Endothelial cell of umbilical vein (primary cell): ENCODE measurements at regions of chr12 and their contacts with region 1.

Region 1: DNA sequence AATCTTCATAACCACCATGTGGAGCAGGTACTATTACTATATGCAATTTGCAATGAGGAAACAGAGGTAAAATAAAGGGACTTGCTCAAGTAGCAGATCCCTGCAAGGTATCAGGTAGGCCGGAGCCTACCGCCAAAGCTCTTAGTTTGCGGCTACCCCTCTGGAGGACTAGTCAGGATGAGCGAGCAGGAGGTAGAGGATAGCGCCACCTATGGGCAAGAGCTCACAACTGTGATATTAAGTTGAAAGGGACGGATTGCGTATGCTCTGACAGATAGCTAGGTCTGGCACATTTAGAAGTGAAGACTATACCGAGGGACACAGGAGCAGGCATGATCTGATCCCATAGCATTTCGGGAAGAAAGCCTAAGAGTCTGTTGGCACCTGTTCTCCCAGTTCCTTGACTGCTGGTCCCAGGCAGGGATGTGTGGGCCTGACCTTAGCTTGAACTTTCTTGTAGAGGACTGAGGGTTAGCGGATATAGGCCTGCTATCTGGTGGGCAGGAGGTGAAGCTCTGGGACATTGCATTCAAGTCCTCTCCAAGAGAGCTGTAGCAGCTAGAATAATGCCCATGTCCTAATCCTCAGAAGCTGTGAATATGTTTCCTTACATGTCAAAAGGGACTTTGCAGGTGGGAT is 48.0 kb downstream of the SLC17A8 start:
- DNase-seq: peak; percentile 48
- H3K4me3 ChIP-seq: no peak overlapping the region
- H3K27ac ChIP-seq: no peak overlapping the region
- H3K4me1 ChIP-seq: no peaks in the 10 kb centered on the region
- H3K27me3 ChIP-seq: no peaks in the 10 kb centered on the region
- CTCF ChIP-seq: peak; percentile 67 to 73
- POLR2A ChIP-seq: no peak

Region 2: GRCh38 chr12:99852666-99853065 is 552.2 kb before region 1 on chr12:
- CTCF ChIA-PET with region 1: no interaction called
- POLR2A ChIA-PET with region 1: no interaction called
- dilution Hi-C with region 1: no loop called
- intact Hi-C with region 1: no loop called
- DNase-seq: no peak
- H3K4me3 ChIP-seq: no peak overlapping the region
- H3K27ac ChIP-seq: no peak overlapping the region
- H3K4me1 ChIP-seq: no peaks in the 10 kb centered on the region
- H3K27me3 ChIP-seq: no peaks in the 10 kb centered on the region
- CTCF ChIP-seq: no peak
- POLR2A ChIP-seq: no peak

Region 3: DNA sequence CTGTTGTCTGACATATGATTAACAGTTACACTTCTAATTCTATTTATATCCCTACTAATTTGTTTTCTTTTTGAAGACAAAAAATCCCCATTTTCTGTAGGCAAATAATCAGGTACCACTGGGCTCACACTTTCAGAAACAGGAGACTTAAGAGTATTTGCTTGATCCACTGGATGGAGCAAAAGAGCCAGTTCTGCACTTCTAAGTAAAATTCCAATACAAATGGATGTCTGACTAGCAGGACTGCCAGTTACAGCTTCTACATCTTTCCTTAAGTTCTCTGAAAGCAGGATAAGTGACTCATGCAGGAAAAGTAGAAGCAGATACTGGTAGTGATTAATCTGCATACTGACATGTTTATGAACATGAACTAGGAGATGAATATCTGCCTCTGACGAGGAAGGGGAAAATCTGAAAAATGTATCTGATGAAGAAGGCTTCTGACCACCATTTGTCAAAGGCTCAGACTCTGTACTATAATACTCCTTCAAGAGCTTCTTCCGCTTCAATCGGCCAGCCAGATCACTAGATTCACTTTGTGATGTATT is 346.3 kb before region 1 on chr12:
- CTCF ChIA-PET with region 1: interaction called, 29 read pairs
- POLR2A ChIA-PET with region 1: no interaction called
- dilution Hi-C with region 1: no loop called
- intact Hi-C with region 1: loop called (anchors 10 kb)
- DNase-seq: peak; percentile 94
- H3K4me3 ChIP-seq: no peak overlapping the region
- H3K27ac ChIP-seq: peak overlapping the region; percentile 58
- H3K4me1 ChIP-seq: peaks cover 14% of the 10 kb centered on the region
- H3K27me3 ChIP-seq: no peaks in the 10 kb centered on the region
- CTCF ChIP-seq: peak; percentile 24 to 35
- POLR2A ChIP-seq: peak; percentile 35

Region 4: GRCh38 chr12:100234598-100235304 is 170.1 kb before region 1 on chr12:
- CTCF ChIA-PET with region 1: interaction called, 172 read pairs
- POLR2A ChIA-PET with region 1: no interaction called
- dilution Hi-C with region 1: no loop called
- intact Hi-C with region 1: loop called (anchors 1 kb)
- DNase-seq: peak; percentile 58
- H3K4me3 ChIP-seq: no peak overlapping the region
- H3K27ac ChIP-seq: no peak overlapping the region
- H3K4me1 ChIP-seq: no peaks in the 10 kb centered on the region
- H3K27me3 ChIP-seq: no peaks in the 10 kb centered on the region
- CTCF ChIP-seq: peak; percentile 52 to 53
- POLR2A ChIP-seq: no peak

Region 5: GRCh38 chr12:100279607-100280244 is 125.2 kb before region 1 on chr12:
- CTCF ChIA-PET with region 1: no interaction called
- POLR2A ChIA-PET with region 1: no interaction called
- dilution Hi-C with region 1: no loop called
- intact Hi-C with region 1: no loop called
- DNase-seq: no peak
- H3K4me3 ChIP-seq: no peak overlapping the region
- H3K27ac ChIP-seq: no peak overlapping the region
- H3K4me1 ChIP-seq: no peaks in the 10 kb centered on the region
- H3K27me3 ChIP-seq: no peaks in the 10 kb centered on the region
- CTCF ChIP-seq: no peak
- POLR2A ChIP-seq: no peak

Region 6: DNA sequence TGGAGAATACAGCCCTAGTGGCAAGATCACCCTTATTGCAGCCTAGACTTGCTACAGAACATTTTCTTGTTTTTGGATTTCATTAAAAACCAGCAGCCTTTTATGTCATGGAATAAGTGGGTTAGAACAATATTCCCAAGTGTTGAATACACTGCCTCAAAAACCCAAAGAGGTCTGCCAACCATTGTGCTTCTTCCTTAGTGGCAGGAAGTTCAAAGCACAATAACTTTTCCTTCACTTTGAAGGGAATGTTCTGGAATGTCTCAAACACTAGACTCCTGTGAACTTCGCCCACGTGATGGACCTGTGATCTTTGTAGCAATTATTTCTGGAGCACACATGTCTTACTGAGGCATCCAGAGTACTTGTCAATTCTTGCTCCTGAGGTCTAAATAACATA is 39.5 kb before region 1 on chr12:
- CTCF ChIA-PET with region 1: interaction called, 19 read pairs
- POLR2A ChIA-PET with region 1: no interaction called
- dilution Hi-C with region 1: no loop called
- intact Hi-C with region 1: no loop called
- DNase-seq: peak; percentile 74
- H3K4me3 ChIP-seq: no peak overlapping the region
- H3K27ac ChIP-seq: no peak overlapping the region
- H3K4me1 ChIP-seq: no peaks in the 10 kb centered on the region
- H3K27me3 ChIP-seq: peaks cover 0 to 3% of the 10 kb centered on the region in 2 experiments
- CTCF ChIP-seq: no peak
- POLR2A ChIP-seq: no peak

Region 7: DNA sequence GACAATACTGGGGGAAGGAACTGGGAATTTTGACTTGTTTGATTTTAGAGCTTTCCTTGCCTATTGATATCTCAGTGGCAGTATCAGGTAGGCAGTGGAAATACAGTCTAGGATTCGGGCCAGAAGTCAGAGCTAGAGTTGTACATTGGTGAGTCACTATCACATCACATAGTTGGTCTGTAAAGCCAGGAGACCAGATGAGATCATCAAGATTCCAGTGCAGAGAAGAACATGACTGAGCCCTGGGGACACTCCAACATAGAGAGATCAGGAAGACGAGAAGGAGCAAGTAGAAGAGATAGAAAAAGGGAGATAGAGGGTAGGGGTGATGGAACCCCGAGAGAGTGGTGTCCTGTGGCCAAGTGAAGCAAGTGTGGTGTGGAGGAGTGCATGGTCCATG is 22.2 kb after region 1 on chr12:
- CTCF ChIA-PET with region 1: interaction called, 11 read pairs
- POLR2A ChIA-PET with region 1: no interaction called
- dilution Hi-C with region 1: no loop called
- intact Hi-C with region 1: no loop called
- DNase-seq: no peak
- H3K4me3 ChIP-seq: no peak overlapping the region
- H3K27ac ChIP-seq: no peak overlapping the region
- H3K4me1 ChIP-seq: no peaks in the 10 kb centered on the region
- H3K27me3 ChIP-seq: no peaks in the 10 kb centered on the region
- CTCF ChIP-seq: no peak
- POLR2A ChIP-seq: no peak